Activated naive CD4-positive, alpha-beta T cell treated with anti-CD3 and anti-CD28 coated beads for 36 hours (primary cell): ENCODE measurements at regions of chr7 and their contacts with region 1.

Region 1: DNA sequence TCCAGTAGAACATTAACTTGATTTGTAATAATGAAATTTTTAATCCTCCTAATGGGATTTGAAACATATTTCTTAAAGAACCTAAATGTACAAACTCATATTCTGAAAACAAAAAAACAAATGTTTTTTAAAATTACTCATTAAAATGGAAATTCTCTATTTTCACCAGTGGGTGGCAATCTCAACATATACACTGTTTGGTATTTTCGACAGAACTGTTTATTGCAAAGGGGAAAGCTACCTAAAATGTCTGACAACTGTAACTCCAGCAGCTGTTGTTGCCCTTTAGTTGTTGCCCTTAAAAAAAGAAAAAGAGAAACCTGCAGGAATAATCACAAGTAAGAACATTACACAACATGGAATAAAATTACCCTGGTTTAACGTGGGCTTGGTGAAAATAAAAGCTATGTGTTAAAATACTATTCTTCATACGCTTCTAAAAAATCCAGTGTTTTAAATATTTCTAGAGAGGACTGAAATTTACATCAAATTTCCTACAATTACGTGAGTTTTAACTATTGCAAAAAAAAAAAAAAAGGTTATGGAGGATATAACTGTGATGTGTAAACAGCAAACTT is 54.5 kb downstream of the COL1A2 start:
- DNase-seq: no peak
- H3K4me3 Mint-ChIP-seq: no peak overlapping the region
- H3K27ac Mint-ChIP-seq: no peak overlapping the region
- H3K4me1 Mint-ChIP-seq: no peaks in the 10 kb centered on the region
- H3K27me3 Mint-ChIP-seq: peaks cover 12% of the 10 kb centered on the region

Region 2: GRCh38 chr7:94154858-94155257 is 294.4 kb before region 1 on chr7:
- CTCF ChIA-PET with region 1: no interaction called
- intact Hi-C with region 1: no loop called
- DNase-seq: no peak
- H3K4me3 Mint-ChIP-seq: no peak overlapping the region
- H3K27ac Mint-ChIP-seq: no peak overlapping the region
- H3K4me1 Mint-ChIP-seq: no peaks in the 10 kb centered on the region
- H3K27me3 Mint-ChIP-seq: peaks cover 8% of the 10 kb centered on the region

Region 3: DNA sequence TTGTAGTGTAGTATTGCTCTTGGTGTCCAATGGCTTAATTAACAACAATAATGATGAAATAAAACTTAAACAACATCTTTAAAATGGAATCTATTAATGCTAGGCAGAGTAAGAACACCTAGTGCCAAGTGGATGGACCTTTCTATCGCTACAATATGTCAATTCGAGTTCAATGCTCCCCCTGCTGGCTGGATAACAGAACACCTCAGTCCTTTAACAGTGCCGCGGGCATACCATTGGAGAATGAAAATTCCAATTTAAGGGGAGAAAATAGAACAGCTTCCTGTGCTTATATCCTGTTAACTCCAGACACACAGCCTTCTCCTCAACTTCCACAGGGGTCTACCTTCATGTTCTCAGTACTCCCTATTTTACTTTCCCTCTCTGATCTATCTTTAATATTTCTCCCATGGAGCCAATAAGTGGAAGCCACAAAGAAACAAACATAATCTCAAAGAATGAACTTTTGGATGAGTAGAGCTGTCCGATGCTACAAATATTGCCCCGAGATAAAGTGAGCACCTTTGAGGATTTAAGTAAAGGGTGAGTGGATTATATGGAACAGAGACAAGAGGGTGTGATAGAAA is 13.1 kb before region 1 on chr7:
- CTCF ChIA-PET with region 1: interaction called, 16 read pairs
- intact Hi-C with region 1: no loop called
- DNase-seq: peak; percentile 68
- H3K4me3 Mint-ChIP-seq: no peak overlapping the region
- H3K27ac Mint-ChIP-seq: no peak overlapping the region
- H3K4me1 Mint-ChIP-seq: no peaks in the 10 kb centered on the region
- H3K27me3 Mint-ChIP-seq: peaks cover 20% of the 10 kb centered on the region

Region 4: DNA sequence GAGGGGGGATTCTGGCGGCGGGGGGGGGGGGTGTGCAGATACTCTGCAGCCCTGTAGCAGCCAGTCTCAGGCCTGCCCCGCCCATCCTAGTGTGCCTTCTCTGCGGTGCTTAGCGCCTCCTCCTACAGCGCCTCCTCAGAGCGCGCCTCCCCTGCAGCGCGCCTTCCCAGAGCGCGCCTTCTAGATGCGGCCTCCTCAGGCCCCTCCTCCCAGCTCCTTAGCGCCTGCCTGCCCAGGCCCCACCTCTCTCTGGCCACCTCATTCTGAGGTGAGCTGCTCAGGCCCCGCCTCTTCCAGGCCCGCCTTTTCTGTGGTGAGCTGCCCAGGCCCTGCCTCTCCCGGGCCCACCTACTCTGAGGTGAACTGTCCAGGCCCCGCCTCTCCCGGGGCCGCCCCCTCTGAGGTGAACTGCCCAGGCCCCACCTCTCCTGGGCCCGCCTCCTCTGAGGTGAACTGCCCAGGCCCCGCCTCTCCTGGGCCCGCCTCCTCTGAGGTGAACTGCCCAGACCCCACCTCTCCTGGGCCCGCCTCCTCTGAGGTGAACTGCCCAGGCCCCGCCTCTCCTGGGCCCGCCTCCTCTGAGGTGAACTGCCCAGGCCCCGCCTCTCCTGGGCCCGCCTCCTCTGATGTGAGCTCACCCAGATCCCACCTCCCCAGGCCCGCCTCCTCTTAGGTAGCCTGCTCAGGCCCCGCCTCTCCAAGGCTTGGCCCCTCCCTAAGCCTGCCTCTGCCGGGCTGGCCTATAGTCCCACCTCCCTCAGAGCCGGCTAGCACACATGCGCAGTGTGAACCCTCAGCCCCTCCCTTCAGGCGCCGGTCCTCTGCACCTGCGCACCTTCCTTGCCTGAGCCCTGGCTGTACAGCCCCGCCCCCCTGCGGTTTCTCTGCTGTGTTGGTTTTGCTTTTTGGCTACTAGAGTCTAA is 208.8 kb after region 1 on chr7:
- CTCF ChIA-PET with region 1: interaction called, 15 read pairs
- intact Hi-C with region 1: loop called (anchors 1 kb)
- DNase-seq: peak; percentile 95
- H3K4me3 Mint-ChIP-seq: peak overlapping the region; percentile 84
- H3K27ac Mint-ChIP-seq: no peak overlapping the region
- H3K4me1 Mint-ChIP-seq: peaks cover 13% of the 10 kb centered on the region
- H3K27me3 Mint-ChIP-seq: peaks cover 24% of the 10 kb centered on the region

Region 5: GRCh38 chr7:94888551-94888950 is 439.3 kb after region 1 on chr7:
- CTCF ChIA-PET with region 1: no interaction called
- intact Hi-C with region 1: no loop called
- DNase-seq: no peak
- H3K4me3 Mint-ChIP-seq: no peak overlapping the region
- H3K27ac Mint-ChIP-seq: no peak overlapping the region
- H3K4me1 Mint-ChIP-seq: no peaks in the 10 kb centered on the region
- H3K27me3 Mint-ChIP-seq: peaks cover 8% of the 10 kb centered on the region

Region 6: DNA sequence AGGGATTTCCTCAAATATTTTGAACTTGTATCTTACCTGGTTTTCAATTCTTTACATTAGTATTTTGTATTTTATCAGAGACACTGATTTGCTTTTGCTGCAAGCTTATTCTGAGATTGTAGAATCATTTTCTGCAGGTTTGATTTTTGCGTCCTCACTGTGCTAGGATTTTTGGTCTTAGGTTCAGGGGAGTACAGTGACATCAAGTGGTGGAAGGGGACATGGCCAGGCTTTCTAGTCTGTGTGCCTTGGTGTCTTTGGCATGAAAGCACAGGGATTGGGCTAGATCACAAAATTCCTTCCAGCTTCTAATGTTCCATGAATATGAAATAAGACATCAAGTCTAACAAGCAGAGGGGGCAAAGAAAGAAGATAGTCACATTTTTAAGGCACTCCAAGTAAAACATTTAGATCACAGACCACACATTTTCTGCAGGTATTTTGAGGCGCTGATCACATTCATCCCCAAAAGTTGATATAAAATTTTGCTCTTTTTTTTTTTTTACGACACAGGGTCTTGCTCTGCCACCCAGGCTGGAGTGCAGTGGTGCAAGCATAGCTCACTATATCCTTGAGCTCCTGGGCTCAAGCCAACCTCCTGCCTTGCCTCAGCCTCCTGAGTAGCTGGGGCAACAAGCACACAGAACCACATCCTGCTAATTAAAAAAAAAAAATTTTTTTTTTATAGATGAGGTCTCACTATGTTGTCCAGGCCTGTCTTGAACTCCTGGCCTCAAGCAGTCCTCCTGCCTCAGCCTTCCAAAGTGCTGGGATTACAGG is 750.7 kb after region 1 on chr7:
- CTCF ChIA-PET with region 1: no interaction called
- intact Hi-C with region 1: loop called (anchors 5 kb)
- DNase-seq: peak; percentile 8
- H3K4me3 Mint-ChIP-seq: no peak overlapping the region
- H3K27ac Mint-ChIP-seq: no peak overlapping the region
- H3K4me1 Mint-ChIP-seq: no peaks in the 10 kb centered on the region
- H3K27me3 Mint-ChIP-seq: peaks cover 3% of the 10 kb centered on the region

Region 7: DNA sequence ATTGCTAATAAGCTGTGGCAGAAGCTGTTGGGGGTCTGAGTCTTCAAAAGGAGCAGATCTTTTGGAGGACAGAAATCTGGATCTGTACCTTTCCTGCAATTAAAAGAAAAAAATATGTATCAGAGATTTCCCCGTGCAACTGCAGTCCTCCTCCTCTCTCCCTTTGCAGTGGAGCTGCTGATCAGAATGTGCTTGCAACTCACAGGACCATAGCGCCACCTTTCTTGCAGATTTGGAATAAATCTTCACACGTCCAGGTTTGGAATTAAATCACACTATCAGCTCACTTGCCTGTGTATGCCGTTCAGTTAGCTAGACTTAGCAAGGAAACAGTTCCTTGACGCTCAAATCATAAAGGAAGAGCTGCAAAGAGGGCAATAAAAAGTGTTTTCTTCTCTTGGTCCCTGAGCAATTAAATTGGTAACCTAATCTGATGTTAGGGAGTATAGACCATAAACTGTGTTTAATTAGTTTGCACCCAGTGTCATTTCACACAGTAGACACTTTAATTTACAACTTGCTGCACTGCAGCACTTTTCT is 797.7 kb after region 1 on chr7:
- CTCF ChIA-PET with region 1: interaction called, 4 read pairs
- intact Hi-C with region 1: loop called (anchors 1 kb)
- DNase-seq: peak; percentile 49
- H3K4me3 Mint-ChIP-seq: no peak overlapping the region
- H3K27ac Mint-ChIP-seq: no peak overlapping the region
- H3K4me1 Mint-ChIP-seq: no peaks in the 10 kb centered on the region
- H3K27me3 Mint-ChIP-seq: peaks cover 8% of the 10 kb centered on the region

Region 8: DNA sequence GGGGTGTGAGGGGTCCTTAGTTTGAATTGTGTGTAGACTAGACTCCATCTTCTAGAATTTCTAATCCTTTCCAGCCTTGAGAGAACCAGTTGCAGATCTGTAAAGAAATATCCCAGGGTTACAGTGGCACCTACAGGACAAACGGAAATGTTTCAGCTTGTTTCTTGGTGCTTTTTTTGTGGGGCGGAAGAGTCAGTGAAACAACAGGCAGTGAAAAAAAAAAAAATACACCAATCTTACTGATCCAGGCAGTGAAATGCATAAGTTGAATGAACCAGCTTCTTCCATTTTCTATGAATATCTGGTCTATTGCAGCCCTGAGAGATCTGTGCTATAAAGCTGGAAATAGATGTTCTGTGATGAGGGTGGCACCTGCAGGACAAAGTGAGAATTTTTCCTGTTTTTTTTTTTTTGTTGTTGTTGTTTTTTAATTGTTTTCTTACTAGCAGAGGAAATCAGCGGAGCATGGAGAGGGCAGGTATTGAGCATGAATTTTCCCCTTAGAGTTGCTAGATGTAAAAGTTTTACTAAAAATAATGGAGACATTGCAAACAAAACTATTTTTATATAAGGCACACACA is 1241.2 kb after region 1 on chr7:
- CTCF ChIA-PET with region 1: no interaction called
- intact Hi-C with region 1: loop called (anchors 10 kb)
- DNase-seq: peak; percentile 9
- H3K4me3 Mint-ChIP-seq: no peak overlapping the region
- H3K27ac Mint-ChIP-seq: no peak overlapping the region
- H3K4me1 Mint-ChIP-seq: no peaks in the 10 kb centered on the region
- H3K27me3 Mint-ChIP-seq: peaks cover 2% of the 10 kb centered on the region